BJ (cell line): ENCODE measurements at regions of chr5 and their contacts with region 1.

Region 1: GRCh38 chr5:37837414-37838032 is 2.3 kb downstream of the GDNF start:
- DNase-seq: no peak
- H3K4me3 ChIP-seq: peak overlapping the region; percentile 62
- H3K27me3 ChIP-seq: peaks cover 2% of the 10 kb centered on the region; the same call in 1 of the 2 replicates
- CTCF ChIP-seq: peak; percentile 89

Region 2: DNA sequence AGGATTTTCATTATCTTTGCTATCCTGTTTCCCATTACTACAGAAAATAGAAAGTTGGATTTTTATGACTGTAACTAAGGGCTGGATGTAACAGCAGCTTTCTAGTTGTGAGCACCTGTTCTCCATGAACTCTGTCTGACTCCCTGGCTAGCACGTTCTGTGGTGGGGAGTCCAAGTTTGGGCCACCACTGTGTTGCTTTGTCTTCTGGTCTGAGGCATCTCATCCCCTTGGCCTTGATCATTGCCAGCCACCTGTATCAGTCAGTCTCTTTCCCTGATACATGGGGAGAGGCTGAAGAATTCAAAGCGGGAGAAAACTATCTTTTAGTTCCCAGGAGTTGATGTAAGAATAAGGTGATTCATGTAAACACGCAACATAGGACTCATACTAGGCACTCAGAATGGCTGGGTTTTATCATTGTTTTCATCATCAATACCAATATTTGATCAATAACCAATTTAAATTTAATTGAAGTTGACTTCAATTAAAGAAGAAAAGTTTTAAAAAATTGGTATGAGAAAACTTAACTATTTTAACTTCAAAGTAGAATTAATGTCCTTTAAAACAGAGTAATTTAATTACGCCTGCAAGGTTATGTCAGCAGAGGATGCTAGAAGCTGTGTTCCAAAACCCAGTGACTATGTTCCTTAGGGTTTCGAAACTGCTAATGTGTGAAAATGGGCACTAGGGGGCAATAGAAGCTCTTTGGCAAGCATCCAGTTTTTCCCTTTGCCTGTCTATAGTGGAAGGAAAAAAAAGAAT is 424.8 kb before region 1 on chr5:
- CTCF ChIA-PET with region 1: interaction called, 12 read pairs
- POLR2A ChIA-PET with region 1: no interaction called
- DNase-seq: peak; percentile 37
- H3K4me3 ChIP-seq: no peak overlapping the region
- H3K27me3 ChIP-seq: no peaks in the 10 kb centered on the region
- CTCF ChIP-seq: peak; percentile 92

Region 3: DNA sequence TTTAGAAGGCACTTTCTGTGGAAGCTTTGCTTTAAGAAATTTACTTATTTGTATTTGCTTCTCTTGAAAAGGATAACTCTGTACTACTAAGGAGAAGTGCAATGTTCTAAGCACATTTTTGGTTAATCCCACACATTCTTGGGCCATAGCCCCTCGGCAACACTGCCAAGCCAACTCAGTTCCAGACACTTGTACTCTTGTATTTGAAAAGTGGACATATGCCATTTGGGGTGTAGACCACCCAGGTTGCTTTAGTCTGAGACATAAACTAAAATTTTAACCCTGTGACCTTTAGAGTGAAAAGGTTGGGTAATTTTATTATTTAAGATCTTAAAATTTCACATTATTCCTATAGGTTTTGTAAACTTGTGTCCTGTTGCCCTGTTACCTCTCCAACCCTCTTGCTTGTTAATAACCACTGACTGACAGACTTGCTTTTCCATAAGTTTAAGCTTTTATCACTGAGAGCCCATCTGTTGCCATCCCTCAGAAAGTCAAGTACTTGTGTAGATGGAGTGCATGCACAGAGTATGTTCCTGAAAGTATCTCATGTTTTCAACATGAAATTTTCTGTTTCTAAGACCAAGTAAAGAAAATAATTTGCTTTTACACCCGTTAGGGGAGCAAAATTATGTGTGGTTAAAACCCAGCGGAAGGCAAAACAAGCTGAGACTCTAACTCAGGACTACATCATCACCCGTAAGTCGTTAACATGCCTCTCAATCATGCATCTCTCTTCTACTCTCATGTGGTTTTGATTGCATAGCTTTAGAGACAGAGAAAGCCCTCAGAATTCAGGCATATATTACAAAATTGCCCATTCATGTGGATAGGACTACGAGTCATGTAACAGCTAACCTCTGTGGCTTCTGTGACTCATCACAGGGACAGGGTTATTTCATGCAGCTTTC is 115.0 kb before region 1 on chr5:
- CTCF ChIA-PET with region 1: interaction called, 12 read pairs
- POLR2A ChIA-PET with region 1: interaction called, 4 read pairs
- DNase-seq: peak; percentile 81
- H3K4me3 ChIP-seq: no peak overlapping the region
- H3K27me3 ChIP-seq: no peaks in the 10 kb centered on the region
- CTCF ChIP-seq: no peak

Region 4: DNA sequence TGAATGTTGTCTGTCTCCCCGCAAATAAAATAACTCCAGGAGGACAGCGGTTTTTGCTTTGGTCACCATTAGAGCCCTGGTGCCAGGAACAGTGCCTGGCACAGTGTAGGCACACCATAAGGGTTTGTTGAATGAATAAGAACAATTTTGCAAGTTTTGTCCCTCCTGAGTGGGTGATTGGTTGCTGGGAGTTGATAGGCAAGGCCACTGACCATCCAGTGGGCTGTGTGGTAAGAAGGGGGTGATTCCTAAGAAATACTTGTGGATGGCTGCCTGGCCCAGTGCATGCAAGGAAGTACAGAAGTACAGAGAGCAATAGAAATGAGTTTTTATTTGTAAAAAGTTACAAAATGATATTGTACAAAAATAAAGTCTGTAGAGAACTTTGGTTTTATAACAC is 25.2 kb before region 1 on chr5:
- CTCF ChIA-PET with region 1: interaction called, 12 read pairs
- POLR2A ChIA-PET with region 1: no interaction called
- DNase-seq: no peak
- H3K4me3 ChIP-seq: no peak overlapping the region
- H3K27me3 ChIP-seq: no peaks in the 10 kb centered on the region
- CTCF ChIP-seq: no peak

Region 5: GRCh38 chr5:38193015-38193581 is 355.6 kb after region 1 on chr5:
- CTCF ChIA-PET with region 1: interaction called, 67 read pairs
- POLR2A ChIA-PET with region 1: no interaction called
- DNase-seq: no peak
- H3K4me3 ChIP-seq: no peak overlapping the region
- H3K27me3 ChIP-seq: peaks cover 5% of the 10 kb centered on the region
- CTCF ChIP-seq: peak; percentile 86